ENCODE measurements at regions of chr16 and their contacts with region 1.

Region 1: DNA sequence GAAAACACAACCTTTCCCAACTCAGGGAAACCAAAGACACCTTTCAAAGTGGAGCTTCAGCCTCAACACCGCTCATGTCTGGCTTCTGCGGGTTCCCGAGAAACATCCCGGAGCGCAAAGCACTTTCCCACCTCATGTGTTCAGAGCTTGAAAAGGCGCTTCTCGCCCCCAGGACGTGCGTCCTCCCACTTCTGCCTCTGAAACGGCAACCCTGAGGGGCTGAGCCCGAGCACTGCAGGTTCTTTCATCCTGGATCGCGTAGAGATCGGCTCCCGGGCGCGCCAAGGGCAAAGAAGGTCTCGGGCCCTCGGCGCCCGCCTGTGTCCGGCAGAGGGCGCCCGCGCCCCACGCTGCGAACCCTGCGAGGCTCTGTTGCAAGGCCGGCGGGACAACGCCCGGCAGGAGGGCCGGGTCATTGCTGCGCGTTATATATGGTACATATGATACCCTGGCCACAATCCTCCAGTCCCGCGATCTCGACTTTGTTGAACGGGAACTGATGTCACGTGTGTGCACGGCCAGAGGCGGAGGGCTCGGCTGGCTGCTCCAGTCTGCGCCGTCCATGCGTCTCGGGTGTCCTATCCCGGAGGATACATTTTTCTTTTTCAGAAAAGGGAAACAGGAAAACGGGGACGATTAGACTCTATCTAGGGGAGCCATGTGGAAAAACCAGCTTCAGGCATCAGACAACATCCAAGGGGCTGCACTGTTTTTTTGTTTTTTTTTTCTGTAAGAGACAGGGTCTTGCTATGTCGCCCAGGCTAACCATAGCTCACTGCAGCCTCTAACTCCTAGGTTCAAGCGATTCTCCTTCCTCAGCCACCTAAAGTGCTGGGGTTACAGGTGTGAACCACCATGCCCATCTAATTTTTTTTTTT is 19.1 kb downstream of the COQ7 start:
- DNase-seq: peak; percentile 91 to 94
- H3K4me3 ChIP-seq: peak overlapping the region; percentile 60
- H3K27ac ChIP-seq: peak overlapping the region; percentile 51
- H3K4me1 ChIP-seq: peaks cover 20% of the 10 kb centered on the region
- H3K27me3 ChIP-seq: no peaks in the 10 kb centered on the region
- CTCF ChIP-seq: peak; percentile 96

Region 2: GRCh38 chr16:18801197-18801972 is 285.2 kb before region 1 on chr16 and contains the start of gene ARL6IP1:
- CTCF ChIA-PET with region 1: no interaction called
- POLR2A ChIA-PET with region 1: interaction called, 23 read pairs
- intact Hi-C with region 1: no loop called
- DNase-seq: peak; percentile 98 to 99
- H3K4me3 ChIP-seq: peak within 1 kb of the TSS; percentile 98
- H3K27ac ChIP-seq: peak within 1 kb of the TSS; percentile 85
- H3K4me1 ChIP-seq: peaks cover 48% of the 10 kb centered on the region
- H3K27me3 ChIP-seq: no peaks in the 10 kb centered on the region
- CTCF ChIP-seq: peak; percentile 91
- total RNA-seq, gene ARL6IP1: 294 and 338 TPM in 2 replicates

Region 3: DNA sequence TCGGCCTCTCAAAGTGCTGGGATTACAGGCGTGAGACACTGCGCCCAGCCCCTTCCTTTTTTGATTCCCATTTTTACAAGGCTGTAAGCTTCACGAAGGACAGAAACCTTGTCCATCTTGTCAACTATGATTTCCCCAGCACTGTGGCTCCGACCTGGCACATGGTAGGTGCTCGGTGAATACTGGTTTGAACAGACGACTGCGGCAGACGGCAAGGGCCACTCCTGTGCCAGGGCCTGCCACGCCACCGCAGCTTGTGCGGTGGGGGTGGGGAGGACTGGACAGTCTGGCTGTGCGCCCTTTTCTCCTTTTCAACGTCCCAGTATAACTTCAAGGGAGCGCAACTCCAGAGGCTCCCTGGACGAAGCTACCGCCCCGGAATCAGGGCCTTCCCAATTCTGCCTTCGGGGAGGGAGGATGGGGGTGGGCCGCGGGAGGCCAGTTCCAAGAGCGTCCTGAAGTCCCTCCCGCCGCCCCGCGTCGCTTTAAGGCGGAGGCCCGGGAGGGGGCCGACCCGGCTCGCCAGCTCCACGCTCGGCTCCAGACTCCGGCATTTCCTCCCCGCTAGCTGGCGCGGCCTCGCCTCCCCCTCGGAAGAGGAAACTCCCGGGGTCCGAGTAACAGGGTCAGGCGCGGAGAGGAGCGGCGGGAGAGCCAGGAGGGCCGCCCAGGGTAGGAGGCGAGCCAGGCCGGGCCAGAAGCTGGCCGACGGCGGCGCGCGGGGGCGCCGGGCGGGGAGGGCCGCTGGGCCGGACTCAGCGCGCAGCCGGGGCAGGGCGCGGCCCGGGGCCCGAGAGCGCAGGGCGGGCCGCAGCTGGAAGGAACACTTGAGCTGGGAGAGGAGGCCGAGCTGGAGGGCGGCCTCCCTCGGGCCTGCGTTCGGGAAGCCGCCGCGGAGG is 27.1 kb after region 1 on chr16 and contains the start of gene ITPRIPL2:
- CTCF ChIA-PET with region 1: interaction called, 6 read pairs
- POLR2A ChIA-PET with region 1: no interaction called
- intact Hi-C with region 1: loop called (anchors 1 kb)
- DNase-seq: peak; percentile 90 to 95
- H3K4me3 ChIP-seq: peak within 1 kb of the TSS; percentile 85
- H3K27ac ChIP-seq: peak within 1 kb of the TSS; percentile 96
- H3K4me1 ChIP-seq: peaks cover 68% of the 10 kb centered on the region
- H3K27me3 ChIP-seq: no peaks in the 10 kb centered on the region
- CTCF ChIP-seq: no peak
- total RNA-seq, gene ITPRIPL2: 117 and 142 TPM in 2 replicates

Region 4: DNA sequence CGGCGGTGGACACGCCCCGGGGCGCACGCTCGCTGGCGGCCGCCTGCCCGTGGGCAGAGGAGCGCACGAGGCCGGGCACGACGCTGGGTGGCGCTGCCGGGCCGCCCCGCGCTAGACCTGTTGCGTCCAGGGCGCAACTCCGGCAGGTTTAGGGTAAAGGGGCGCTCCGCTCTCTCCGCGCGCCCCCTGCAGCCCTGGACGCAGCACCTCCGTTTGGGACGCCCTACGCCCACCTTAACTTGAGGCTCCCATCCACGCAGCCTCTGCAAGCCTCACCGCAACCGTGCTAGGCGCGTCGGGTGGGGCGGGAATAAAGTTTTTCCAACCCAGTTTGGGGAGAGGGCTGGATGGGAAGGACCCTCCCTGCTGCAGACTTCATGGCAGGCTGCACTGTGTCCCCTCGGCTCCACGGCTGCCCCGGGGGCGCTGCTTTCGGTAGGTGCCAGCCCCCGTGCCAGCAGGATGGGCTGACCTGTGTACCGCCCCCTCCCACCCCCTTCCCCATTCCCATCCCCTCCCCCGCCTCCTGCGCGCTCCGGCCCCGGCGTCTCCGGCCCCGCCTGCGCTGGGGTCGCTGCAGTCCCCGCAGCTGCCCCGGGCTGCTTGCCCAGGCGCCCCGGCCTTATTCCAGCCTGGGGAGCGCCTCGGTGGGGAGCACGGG is 81.3 kb after region 1 on chr16 and contains the start of gene SYT17:
- CTCF ChIA-PET with region 1: interaction called, 3 read pairs
- POLR2A ChIA-PET with region 1: interaction called, 4 read pairs
- intact Hi-C with region 1: loop called (anchors 1 kb)
- DNase-seq: peak; percentile 60 to 90
- H3K4me3 ChIP-seq: peak within 1 kb of the TSS; percentile 96
- H3K27ac ChIP-seq: 0 out of 2 replicates have a peak within 1 kb of the TSS, but pooled peaks have one; percentile 25
- H3K4me1 ChIP-seq: peaks cover 33% of the 10 kb centered on the region
- H3K27me3 ChIP-seq: no peaks in the 10 kb centered on the region
- CTCF ChIP-seq: peak; percentile 75
- total RNA-seq, gene SYT17: 36.6 and 45.2 TPM in 2 replicates

Region 5: DNA sequence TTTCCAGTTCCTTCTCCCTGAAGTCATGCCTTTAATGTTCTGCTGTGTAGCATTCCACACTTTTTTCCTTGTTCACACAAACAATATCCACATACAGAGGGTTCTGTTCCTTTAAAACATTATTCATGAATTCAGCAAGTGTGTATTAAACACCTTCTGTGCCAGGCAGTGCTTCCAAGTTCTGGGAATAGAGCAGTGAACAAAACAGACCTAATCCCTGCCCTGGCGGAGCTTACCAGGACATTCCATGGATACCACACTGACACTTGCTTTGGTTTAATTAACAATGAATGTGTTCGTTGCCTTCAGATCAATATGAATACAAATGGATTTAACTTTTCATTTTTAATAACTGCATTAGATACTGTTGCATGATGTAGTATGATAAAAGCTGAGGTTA is 141.1 kb after region 1 on chr16:
- CTCF ChIA-PET with region 1: no interaction called
- POLR2A ChIA-PET with region 1: interaction called, 12 read pairs
- intact Hi-C with region 1: no loop called
- DNase-seq: no peak
- H3K4me3 ChIP-seq: no peak overlapping the region
- H3K27ac ChIP-seq: no peak overlapping the region
- H3K4me1 ChIP-seq: peaks cover 5% of the 10 kb centered on the region
- H3K27me3 ChIP-seq: no peaks in the 10 kb centered on the region
- CTCF ChIP-seq: no peak

Region 6: DNA sequence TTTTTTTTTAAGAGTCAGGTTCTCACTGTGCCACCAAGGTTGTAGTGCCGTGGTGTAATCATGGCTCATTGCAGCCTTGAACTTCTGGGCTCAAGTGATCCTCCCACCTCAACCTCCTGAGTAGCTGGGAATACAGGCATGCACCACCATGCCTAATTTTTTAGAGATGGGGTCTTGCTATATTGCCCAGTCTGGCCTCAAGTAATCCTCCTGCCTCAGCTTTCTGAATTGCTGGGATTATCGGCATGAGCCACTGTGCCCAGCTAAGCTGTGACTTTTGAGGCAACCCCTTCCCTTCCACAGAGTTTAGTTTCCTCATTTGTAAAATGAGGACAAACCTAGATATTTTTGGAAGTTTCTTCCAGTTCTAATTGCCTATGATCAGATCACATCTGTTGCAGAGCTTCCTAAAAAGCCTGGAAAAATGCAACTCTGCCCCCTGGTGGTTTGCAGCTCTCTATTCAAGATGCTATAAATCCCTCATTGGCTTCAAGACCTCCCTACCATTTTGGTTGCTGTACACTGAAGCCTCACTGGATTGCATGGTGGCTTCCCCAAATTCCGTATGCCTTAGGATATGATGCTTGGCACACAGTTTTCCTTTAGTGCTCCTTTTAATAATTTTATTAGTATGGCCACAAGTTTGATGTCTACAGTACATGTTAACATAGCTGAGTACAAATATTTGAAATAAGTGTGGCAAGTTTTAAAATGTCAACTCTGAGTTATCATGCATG is 416.0 kb after region 1 on chr16:
- CTCF ChIA-PET with region 1: no interaction called
- POLR2A ChIA-PET with region 1: no interaction called
- intact Hi-C with region 1: loop called (anchors 1 kb)
- DNase-seq: peak; percentile 56 to 73
- H3K4me3 ChIP-seq: no peak overlapping the region
- H3K27ac ChIP-seq: no peak overlapping the region
- H3K4me1 ChIP-seq: peaks cover 37% of the 10 kb centered on the region
- H3K27me3 ChIP-seq: no peaks in the 10 kb centered on the region
- CTCF ChIP-seq: peak; percentile 90

Measured in PC-9 (cell line).